ENCODE measurements at regions of chr17 and their contacts with region 1.

Region 1: DNA sequence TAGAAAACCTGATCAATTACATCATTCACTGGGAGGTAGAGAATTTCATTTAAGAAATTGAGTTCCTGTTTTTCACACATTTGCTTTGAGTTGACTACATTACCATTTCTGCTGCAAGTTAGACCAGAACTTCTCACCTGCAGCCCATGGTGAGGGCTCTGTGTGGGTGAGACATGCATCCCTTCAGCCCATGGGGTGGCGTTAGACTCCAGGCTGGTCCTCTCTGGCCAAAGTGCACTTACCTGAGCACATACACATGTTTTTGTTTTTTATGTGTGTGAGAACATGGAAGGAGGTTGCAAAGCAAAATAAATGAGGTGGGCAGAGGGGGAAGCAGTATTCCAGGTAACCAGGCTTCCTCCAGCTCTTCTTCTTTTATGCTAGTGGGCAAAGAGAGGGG is 470.2 kb downstream of the PMP22 start:
- DNase-seq: no peak
- ATAC-seq: no peak
- H3K4me3 ChIP-seq: no peak overlapping the region
- H3K27ac ChIP-seq: no peak overlapping the region
- H3K4me1 ChIP-seq: peaks cover 7% of the 10 kb centered on the region
- H3K27me3 ChIP-seq: no peaks in the 10 kb centered on the region
- CTCF ChIP-seq: no peak
- POLR2A ChIP-seq: no peak
- RAD21 ChIP-seq: no peak

Region 2: GRCh38 chr17:14833201-14833785 is 38.3 kb after region 1 on chr17:
- CTCF ChIA-PET with region 1: no interaction called
- POLR2A ChIA-PET with region 1: no interaction called
- dilution Hi-C with region 1: no loop called
- in situ Hi-C with region 1: no loop called
- intact Hi-C with region 1: loop called (anchors 5 kb)
- DNase-seq: peak; percentile 94
- ATAC-seq: peak; percentile 95
- H3K4me3 ChIP-seq: no peak overlapping the region
- H3K27ac ChIP-seq: peak overlapping the region; percentile 49
- H3K4me1 ChIP-seq: peaks cover 10% of the 10 kb centered on the region
- H3K27me3 ChIP-seq: no peaks in the 10 kb centered on the region
- CTCF ChIP-seq: no peak
- POLR2A ChIP-seq: no peak
- RAD21 ChIP-seq: no peak

Measured in IMR-90 (cell line).